CD8-positive, alpha-beta T cell (primary cell): ENCODE measurements at regions of chr18 and their contacts with region 1.

Region 1: DNA sequence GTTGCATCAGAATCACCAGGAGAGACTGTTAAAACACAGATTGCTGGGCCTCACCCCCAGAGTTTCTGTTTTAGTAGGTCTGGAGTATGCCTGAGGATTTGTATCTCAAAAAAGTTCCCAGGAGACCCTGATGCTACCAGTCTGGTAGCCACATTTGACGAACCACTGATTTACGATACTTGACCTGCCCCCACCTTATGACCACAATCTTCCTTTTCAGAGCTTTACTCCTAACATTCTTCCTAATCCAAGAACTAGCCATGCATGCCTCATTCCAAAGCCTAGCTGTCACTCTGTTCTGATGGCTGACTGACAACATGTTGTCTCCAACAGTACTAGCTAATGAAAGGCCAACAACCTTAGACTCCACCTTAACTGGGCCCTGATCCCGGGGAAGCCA is 191.4 kb downstream of the MBD2 start:
- DNase-seq: no peak
- ATAC-seq: no peak
- H3K4me3 ChIP-seq: no peak overlapping the region
- H3K4me3 Mint-ChIP-seq: no peak overlapping the region
- H3K27ac ChIP-seq: no peak overlapping the region
- H3K27ac Mint-ChIP-seq: no peak overlapping the region
- H3K4me1 ChIP-seq: no peaks in the 10 kb centered on the region
- H3K4me1 Mint-ChIP-seq: no peaks in the 10 kb centered on the region
- H3K27me3 ChIP-seq: no peaks in the 10 kb centered on the region
- H3K27me3 Mint-ChIP-seq: peaks cover 9% of the 10 kb centered on the region
- CTCF ChIP-seq: no peak

Region 2: GRCh38 chr18:54075689-54076088 is 42.6 kb after region 1 on chr18:
- CTCF ChIA-PET with region 1: no interaction called
- POLR2A ChIA-PET with region 1: no interaction called
- intact Hi-C with region 1: loop called in 1 of 2 experiments (anchors 1 kb)
- DNase-seq: no peak
- ATAC-seq: no peak
- H3K4me3 ChIP-seq: no peak overlapping the region
- H3K4me3 Mint-ChIP-seq: no peak overlapping the region
- H3K27ac ChIP-seq: no peak overlapping the region
- H3K27ac Mint-ChIP-seq: no peak overlapping the region
- H3K4me1 ChIP-seq: no peaks in the 10 kb centered on the region
- H3K4me1 Mint-ChIP-seq: no peaks in the 10 kb centered on the region
- H3K27me3 ChIP-seq: no peaks in the 10 kb centered on the region
- H3K27me3 Mint-ChIP-seq: peaks cover 2% of the 10 kb centered on the region
- CTCF ChIP-seq: no peak

Region 3: GRCh38 chr18:54086046-54086802 is 53.2 kb after region 1 on chr18:
- CTCF ChIA-PET with region 1: no interaction called
- POLR2A ChIA-PET with region 1: no interaction called
- intact Hi-C with region 1: no loop called
- DNase-seq: peak in 3 of 9 experiments; percentile 21 to 63 (median 23)
- ATAC-seq: peak; percentile 61
- H3K4me3 ChIP-seq: no peak overlapping the region
- H3K4me3 Mint-ChIP-seq: peak overlapping the region; percentile 4
- H3K27ac ChIP-seq: peak overlapping the region in 1 of 2 experiments; percentile 21
- H3K27ac Mint-ChIP-seq: peak overlapping the region; percentile 80
- H3K4me1 ChIP-seq: no peaks in the 10 kb centered on the region
- H3K4me1 Mint-ChIP-seq: peaks cover 15% of the 10 kb centered on the region
- H3K27me3 ChIP-seq: no peaks in the 10 kb centered on the region
- H3K27me3 Mint-ChIP-seq: peaks cover 2% of the 10 kb centered on the region
- CTCF ChIP-seq: no peak